ENCODE measurements at regions of chr15 and their contacts with region 1.

Region 1: DNA sequence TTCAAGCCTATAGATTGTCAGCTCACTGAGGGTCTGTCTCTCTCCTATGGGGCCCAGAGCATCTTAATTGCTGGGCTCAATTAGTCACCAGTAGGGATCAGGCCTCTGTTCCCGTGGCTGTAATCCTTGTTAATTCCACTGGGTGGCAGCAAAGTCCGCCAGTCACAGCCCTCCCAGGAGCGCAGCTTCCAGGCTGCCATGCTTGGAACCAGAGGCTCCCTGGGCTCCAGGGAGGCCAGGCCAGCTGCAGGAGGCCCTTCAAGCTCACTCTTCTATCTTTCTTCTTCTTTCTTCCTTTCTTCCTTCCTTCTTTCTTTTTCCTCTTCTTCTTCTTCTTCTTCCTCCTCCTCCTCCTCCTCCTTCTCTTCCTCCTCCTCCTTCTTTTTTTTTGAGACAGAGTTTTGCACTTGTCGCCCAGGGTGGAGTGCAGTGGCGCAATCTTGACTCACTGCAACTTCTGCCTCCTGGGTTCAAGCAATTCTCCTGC is 14.4 kb downstream of the RNU5B-1 start:
- DNase-seq: peak; percentile 84
- ATAC-seq: peak; percentile 99
- H3K4me3 ChIP-seq: no peak overlapping the region
- H3K27ac ChIP-seq: no peak overlapping the region
- H3K4me1 ChIP-seq: no peaks in the 10 kb centered on the region
- H3K27me3 ChIP-seq: no peaks in the 10 kb centered on the region
- CTCF ChIP-seq: peak; percentile 84

Region 2: DNA sequence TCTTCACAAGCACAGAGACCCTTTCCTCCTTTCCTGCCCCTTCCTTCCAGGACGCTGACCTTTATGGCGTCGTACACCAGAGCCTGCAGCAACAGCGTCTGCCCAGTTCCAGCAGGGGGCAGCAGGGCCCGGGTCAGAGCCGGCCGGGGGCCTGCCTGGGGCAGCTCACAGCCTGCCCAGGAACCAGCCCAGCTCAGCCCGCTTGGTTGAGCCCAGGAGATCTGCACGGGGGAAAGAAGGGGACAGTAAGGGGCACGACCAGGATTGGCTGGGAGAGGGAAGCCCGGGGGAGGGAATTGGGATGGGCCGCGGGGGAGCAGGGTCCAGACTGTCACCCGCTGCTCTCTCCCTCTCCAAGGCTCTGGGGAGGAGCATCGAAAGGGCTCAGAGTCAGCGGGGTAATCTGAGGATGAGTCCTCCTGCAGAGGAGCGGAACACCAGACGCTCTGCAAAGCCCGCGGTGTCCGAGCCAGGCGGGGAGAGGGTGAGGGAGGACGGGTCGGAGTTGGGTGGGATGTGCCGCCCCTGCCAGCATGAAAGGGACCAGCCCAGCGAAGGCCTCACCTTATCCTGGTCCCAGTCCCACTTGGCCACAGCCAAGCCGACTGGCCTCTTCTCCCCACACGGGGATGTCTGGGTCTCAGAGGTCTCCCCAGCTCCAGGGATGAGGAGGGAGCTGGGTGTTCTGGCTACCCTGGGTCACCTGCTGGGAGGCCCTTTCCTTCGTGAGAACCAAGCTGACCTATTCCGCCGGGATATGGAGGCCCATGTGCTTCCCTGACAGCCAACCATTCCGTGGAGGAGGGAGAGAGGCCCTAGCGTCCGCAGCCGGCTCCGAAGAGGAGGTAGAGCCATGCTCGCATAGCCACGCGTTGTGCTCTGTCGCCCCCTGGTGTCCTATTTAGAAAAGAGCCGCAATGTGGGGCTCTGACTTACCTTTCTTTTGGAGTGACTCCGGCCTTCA is 66.3 kb after region 1 on chr15:
- CTCF ChIA-PET with region 1: interaction called, 3 read pairs
- POLR2A ChIA-PET with region 1: no interaction called
- intact Hi-C with region 1: loop called (anchors 1 kb)
- DNase-seq: peak; percentile 85
- ATAC-seq: peak; percentile 88
- H3K4me3 ChIP-seq: peak overlapping the region; percentile 38; the same call in 1 of the 2 replicates
- H3K27ac ChIP-seq: no peak overlapping the region
- H3K4me1 ChIP-seq: peaks cover 6% of the 10 kb centered on the region; the same call in 1 of the 2 replicates
- H3K27me3 ChIP-seq: no peaks in the 10 kb centered on the region
- CTCF ChIP-seq: peak; percentile 82

Region 3: DNA sequence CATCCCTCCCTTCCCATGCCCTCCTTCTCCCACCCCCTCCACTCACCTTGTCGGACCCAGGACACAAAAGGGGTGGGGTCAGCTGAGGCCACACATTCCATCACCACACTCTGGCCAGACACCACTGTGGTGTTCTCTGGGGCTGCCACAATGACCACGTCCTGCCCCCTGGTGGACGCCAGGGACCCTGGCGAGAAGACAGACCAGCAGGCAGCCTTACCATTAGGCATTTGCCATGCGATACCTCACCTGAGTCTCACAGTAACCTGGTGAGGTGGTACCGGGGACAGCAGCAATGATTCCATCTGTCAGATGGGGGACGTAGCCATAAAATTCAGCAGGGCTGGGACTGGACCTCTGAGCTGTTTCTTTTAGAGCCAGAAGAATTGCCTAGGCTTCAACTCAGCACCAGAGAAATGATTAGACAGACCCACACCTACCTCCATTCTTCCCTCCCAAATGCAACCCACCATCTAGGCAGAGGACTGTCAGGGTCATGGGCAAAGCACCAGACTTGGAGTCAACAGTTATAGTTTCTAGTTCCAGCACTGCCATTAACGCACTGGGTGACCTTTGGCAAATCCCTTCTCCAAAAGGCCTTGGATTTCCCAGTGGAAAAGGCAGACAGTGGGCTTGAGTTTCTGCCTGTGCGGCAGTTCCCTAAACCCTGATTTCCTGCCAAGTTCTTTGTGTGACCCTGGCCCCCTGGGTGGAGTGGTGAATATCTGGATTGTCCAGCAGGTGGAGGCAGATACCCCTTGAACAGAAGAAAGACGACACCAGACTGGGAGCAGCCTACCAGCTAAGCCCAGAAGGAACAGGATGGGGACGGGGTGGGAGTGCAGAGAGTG is 82.1 kb after region 1 on chr15:
- CTCF ChIA-PET with region 1: no interaction called
- POLR2A ChIA-PET with region 1: no interaction called
- intact Hi-C with region 1: loop called (anchors 2 kb)
- DNase-seq: peak; percentile 67
- ATAC-seq: peak; percentile 95
- H3K4me3 ChIP-seq: no peak overlapping the region
- H3K27ac ChIP-seq: no peak overlapping the region
- H3K4me1 ChIP-seq: no peaks in the 10 kb centered on the region
- H3K27me3 ChIP-seq: no peaks in the 10 kb centered on the region
- CTCF ChIP-seq: peak; percentile 66

Region 4: DNA sequence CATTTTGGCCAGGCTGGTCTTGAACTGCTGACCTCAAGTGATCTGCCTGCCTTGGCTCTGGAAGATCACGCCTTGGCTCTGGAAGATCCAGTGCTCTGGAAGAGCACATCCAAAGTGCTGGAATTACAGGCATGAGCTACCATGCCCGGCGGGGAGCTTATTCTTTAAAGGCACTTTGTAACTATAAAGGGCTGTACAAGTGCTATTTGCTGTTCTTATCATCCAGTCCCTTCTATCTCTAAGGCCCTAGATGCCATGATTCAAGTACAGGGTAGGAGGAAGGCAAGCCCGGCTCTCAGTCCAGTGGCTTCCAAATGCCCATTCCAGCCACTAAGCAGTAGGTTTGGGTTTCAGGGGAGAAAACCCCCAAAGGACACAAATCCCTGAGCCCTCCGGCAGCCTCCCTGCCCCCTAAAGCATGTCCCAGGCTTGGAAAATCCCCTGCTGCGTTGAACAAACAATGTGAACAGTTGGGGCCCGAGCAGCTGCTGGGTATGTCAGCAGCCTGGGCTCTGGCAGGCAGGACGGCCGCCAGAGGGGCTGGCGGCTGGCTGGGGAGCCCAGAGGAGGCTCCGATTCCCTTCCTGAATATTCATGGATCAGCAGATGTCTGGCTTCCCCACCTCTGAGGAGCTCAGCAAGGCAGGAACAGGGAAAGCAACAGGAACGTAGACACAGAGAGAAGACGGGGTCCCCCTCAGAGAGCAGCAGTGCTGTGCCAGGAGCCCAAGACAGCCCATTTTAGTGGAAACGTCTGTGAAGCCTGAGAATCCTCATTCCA is 96.1 kb after region 1 on chr15:
- CTCF ChIA-PET with region 1: no interaction called
- POLR2A ChIA-PET with region 1: no interaction called
- intact Hi-C with region 1: no loop called
- DNase-seq: no peak
- ATAC-seq: no peak
- H3K4me3 ChIP-seq: no peak overlapping the region
- H3K27ac ChIP-seq: no peak overlapping the region
- H3K4me1 ChIP-seq: peaks cover 14% of the 10 kb centered on the region
- H3K27me3 ChIP-seq: no peaks in the 10 kb centered on the region
- CTCF ChIP-seq: no peak

Region 5: DNA sequence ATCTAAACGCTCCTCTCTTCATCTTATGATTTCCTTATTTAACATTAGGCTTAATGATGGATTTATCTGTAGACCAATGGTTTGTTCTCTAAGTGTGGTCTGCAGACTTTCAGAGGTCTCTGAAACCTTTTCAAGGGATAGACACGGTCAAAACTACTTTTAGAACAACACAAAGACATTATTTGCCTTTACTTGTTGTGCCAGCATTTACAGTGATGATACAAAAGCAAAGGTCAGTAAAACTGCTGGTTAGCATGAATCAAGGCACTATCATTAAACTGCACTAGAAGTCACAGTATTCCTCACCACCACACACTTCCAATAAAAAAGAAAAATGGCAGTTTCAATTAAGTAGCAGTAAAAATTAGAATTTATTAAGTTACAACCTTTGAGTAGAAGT is 128.2 kb after region 1 on chr15:
- CTCF ChIA-PET with region 1: no interaction called
- POLR2A ChIA-PET with region 1: interaction called, 10 read pairs
- intact Hi-C with region 1: no loop called
- DNase-seq: no peak
- ATAC-seq: no peak
- H3K4me3 ChIP-seq: no peak overlapping the region
- H3K27ac ChIP-seq: no peak overlapping the region
- H3K4me1 ChIP-seq: no peaks in the 10 kb centered on the region
- H3K27me3 ChIP-seq: no peaks in the 10 kb centered on the region
- CTCF ChIP-seq: no peak